Activated T-helper 1 cell treated with anti-CD3 and anti-CD28 coated beads, Interleukin-12 subunit alpha, Interleukin-12 subunit beta, Interleukin-2, Interleukin-4 antibody, amounts not matched to agents 30 ng/mL and 10 ng/mL and 1 ng/mL, durations not matched to agents 14 hours and 24 hours and 36 hours (primary cell): ENCODE measurements at regions of chr13 and their contacts with region 1.

Region 1: DNA sequence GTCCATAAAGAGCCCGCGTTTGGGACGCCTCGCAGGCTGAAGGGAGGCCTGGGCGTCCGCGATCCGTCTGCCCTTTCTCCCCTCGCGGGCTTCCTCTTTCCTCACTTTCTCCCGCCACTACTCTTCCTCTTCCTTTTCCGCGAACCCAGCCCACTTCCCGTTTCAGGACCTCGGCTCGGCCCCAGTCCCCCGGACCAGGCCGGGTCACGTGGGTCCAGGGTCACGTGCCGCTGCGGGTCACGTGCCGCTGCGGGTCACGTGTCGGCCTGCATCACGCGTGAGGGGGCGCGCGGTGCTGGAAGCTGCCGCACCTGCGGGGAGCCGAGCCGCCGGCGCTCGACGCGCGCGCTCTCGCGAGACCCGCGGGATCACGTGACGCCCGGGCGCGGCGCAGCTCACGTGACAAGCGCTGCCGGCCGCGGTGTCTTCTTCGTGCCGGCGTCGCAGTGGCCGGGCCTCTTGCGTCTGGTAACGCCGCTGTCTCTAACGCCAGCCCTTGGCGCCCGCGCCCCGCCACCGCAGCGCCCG is at the start of gene LAMP1:
- DNase-seq: peak; percentile 98
- H3K4me3 Mint-ChIP-seq: peak within 1 kb of the TSS; percentile 97
- H3K27ac Mint-ChIP-seq: peak within 1 kb of the TSS; percentile 98
- H3K4me1 Mint-ChIP-seq: peaks cover 20% of the 10 kb centered on the region
- H3K27me3 Mint-ChIP-seq: peaks cover 27% of the 10 kb centered on the region
- total RNA-seq, gene LAMP1: 59.4 and 60.3 TPM in 2 replicates

Region 2: DNA sequence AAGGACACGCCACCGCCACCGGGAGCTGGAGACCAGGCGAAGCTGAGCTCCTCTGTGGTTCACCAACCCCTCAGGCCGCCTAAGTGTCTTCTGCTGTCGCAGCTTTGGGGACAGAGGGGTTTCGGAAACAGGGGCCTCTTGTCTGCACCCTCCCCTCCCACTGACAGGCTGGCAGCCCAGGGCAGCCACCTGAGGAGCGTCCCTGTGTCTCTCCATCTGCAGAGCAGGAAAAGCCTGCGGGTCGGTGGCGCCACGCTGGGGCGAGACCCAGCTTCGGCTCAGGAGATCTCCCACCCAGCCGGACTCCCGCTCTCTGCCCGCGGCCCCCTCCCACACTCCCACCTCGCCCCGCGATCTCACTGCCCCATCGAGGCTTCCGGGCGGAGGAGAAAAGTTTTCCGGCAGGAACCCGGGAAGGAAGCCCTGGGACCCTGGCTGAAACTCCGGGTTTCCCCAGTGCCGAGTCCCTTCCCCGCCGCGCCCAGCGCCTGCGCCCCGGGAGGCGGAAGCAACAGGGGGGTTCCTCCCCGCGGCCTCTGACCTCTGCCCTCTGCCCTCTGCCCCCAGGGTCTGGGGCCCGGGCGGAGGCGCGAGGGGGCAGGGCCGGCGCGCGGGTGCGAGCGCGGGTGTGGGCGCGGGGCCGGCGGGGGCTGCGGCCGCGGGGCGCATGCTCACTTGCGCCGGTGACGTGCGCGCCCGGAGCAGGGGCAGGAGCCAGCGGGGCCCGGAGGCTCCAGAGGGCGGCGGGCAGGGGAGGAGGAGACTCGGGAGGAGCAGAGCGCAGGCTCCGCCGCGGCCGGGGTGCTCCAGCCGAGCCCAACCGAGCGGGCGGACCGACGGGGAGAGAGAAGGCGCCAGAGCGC is 607.4 kb before region 1 on chr13 and contains the start of gene ATP11A:
- intact Hi-C with region 1: loop called (anchors 5 kb)
- DNase-seq: peak; percentile 81
- H3K4me3 Mint-ChIP-seq: peak within 1 kb of the TSS; percentile 84
- H3K27ac Mint-ChIP-seq: peak within 1 kb of the TSS; percentile 94
- H3K4me1 Mint-ChIP-seq: peaks cover 59% of the 10 kb centered on the region
- H3K27me3 Mint-ChIP-seq: no peaks in the 10 kb centered on the region
- total RNA-seq, gene ATP11A: 90.4 and 97.8 TPM in 2 replicates

Region 3: GRCh38 chr13:113220877-113221276 is 76.0 kb before region 1 on chr13:
- intact Hi-C with region 1: no loop called
- DNase-seq: no peak
- H3K4me3 Mint-ChIP-seq: no peak overlapping the region
- H3K27ac Mint-ChIP-seq: no peak overlapping the region
- H3K4me1 Mint-ChIP-seq: peaks cover 13% of the 10 kb centered on the region
- H3K27me3 Mint-ChIP-seq: no peaks in the 10 kb centered on the region

Region 4: GRCh38 chr13:113393563-113394338 is 96.8 kb after region 1 on chr13:
- intact Hi-C with region 1: loop called (anchors 1 kb)
- DNase-seq: peak; percentile 80
- H3K4me3 Mint-ChIP-seq: peak overlapping the region; percentile 89
- H3K27ac Mint-ChIP-seq: peak overlapping the region; percentile 66
- H3K4me1 Mint-ChIP-seq: peaks cover 5% of the 10 kb centered on the region
- H3K27me3 Mint-ChIP-seq: peaks cover 10% of the 10 kb centered on the region

Region 5: GRCh38 chr13:113490496-113491417 is 193.9 kb after region 1 on chr13 and contains the start of gene DCUN1D2:
- intact Hi-C with region 1: loop called (anchors 1 kb)
- DNase-seq: peak; percentile 79
- H3K4me3 Mint-ChIP-seq: peak within 1 kb of the TSS; percentile 90
- H3K27ac Mint-ChIP-seq: peak within 1 kb of the TSS; percentile 78
- H3K4me1 Mint-ChIP-seq: peaks cover 62% of the 10 kb centered on the region
- H3K27me3 Mint-ChIP-seq: peaks cover 3% of the 10 kb centered on the region
- total RNA-seq, gene DCUN1D2: 28.7 and 31.2 TPM in 2 replicates

Region 6: DNA sequence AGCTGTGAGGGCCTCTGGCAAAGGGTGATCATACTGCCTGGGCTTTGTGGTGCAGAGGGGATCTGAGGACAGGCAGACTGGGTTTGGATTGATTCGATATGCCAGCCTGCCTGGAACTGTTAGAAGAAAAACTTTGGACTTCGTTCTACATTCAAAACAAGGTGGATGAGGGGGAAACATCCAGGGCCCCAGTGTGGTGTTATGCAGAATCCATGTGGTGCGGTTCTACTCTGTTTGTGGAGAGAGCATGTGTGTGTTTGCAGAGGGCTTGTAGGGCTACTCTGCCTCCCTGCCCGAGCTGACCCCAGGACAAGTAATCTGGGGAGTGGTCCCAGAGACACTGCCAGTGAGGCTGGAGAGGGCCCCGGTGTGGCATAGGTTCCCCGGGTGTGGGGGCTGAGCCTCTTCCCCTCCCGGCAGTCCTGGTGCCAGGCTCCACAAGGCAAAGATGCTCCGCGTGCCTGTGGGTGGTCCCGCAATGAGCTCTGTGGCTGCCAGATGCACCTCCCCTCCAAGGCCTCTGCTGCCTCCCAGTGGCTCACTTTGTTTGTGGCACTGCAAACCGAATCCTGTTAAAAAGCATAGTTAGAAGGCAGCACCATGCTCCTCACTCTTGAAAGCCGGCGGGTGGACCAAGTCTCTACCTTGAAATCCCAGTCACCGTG is 265.3 kb after region 1 on chr13:
- intact Hi-C with region 1: no loop called
- DNase-seq: no peak
- H3K4me3 Mint-ChIP-seq: no peak overlapping the region
- H3K27ac Mint-ChIP-seq: no peak overlapping the region
- H3K4me1 Mint-ChIP-seq: no peaks in the 10 kb centered on the region
- H3K27me3 Mint-ChIP-seq: peaks cover 9% of the 10 kb centered on the region

Region 7: DNA sequence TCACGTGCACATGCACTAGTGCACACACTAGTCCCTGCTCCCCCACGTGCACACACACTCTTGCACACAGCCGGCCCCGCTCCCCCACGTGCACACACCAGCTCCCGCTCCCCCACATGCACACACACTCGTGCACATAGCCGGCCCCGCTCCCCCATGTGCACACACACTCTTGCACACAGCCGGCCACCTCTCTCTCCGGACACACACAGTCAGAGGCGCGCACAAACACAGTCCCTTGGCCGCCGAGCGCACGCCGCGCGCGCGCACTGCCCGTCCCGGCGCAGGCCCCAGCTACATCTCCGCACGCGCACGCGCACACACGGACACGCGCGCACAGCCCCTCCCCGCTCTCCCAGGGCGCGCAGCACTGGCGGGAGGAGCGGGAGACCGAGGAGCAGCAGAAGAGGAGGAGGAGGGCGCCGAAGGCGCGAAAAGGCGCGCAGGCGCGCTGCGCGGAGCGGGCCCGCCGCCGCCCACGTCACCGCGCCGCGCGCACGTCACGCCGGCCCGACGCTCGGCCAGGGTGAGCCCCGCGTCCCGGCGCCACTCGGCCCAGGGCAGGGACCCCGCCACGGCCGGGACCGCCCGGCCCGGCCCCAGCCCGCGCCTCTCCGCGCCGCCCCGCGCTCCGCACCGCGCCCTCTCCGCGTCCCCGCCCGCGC is 287.4 kb after region 1 on chr13 and contains the start of gene TFDP1:
- intact Hi-C with region 1: loop called (anchors 1 kb)
- DNase-seq: peak; percentile 86
- H3K4me3 Mint-ChIP-seq: peak within 1 kb of the TSS; percentile 90
- H3K27ac Mint-ChIP-seq: peak within 1 kb of the TSS; percentile 89
- H3K4me1 Mint-ChIP-seq: peaks cover 36% of the 10 kb centered on the region
- H3K27me3 Mint-ChIP-seq: peaks cover 9% of the 10 kb centered on the region
- total RNA-seq, gene TFDP1: 171 and 173 TPM in 2 replicates